B cell (primary cell): ENCODE measurements at regions of chr1 and their contacts with region 1.

Region 1: GRCh38 chr1:89843281-89844121 is 22.7 kb downstream of the LRRC8D start:
- DNase-seq: peak; percentile 85
- ATAC-seq: peak; percentile 93
- H3K4me3 ChIP-seq: peak overlapping the region; percentile 48 to 84 (median 70)
- H3K4me3 Mint-ChIP-seq: peak overlapping the region; percentile 90
- H3K27ac ChIP-seq: peak overlapping the region; percentile 42 to 75
- H3K27ac Mint-ChIP-seq: peak overlapping the region; percentile 74
- H3K4me1 ChIP-seq: peaks cover 28 to 30% of the 10 kb centered on the region in 2 donors
- H3K4me1 Mint-ChIP-seq: peaks cover 49% of the 10 kb centered on the region
- H3K27me3 ChIP-seq: no peaks in the 10 kb centered on the region
- H3K27me3 Mint-ChIP-seq: no peaks in the 10 kb centered on the region
- CTCF ChIP-seq: peak; percentile 85

Region 2: DNA sequence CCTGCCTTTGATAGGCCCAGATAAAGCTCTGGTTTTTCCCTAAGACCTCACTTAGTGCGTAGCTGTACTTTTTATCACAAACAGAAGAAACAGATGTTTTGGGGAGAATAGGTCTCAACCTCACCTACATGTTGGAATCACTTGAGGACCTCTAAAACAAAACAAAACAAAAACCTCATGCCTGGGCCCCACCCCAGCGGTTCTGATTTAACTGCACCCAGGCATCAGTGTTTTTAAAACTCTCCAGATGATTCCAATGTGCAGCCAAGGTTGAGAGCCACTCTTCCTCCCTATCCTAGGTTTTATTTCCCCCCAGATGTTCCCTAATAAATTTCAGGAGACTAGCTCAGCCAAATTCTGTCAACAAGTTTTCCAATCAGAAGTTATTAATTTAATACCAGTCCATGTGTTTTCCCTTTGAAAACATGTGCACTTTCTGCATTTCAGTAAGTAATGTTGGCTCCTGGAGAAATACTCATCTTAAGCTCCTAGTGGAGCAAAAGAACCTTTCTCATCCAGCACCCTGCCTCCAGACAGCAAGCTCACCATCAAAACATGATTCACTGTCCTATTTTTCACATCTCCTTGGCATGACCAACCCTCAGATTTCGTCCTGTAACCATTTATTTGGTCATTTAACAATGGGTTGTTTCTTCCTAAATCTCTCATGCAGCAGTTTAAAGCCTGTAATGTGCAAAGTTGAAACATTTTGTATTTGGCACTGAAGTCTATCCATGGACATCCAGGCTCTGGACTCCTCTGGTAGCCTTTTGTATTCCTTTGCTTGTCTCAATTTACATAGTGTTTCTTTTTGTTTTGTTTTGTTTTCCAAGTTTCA is 183.1 kb before region 1 on chr1:
- CTCF ChIA-PET with region 1: no interaction called
- POLR2A ChIA-PET with region 1: no interaction called
- intact Hi-C with region 1: no loop called
- DNase-seq: no peak
- ATAC-seq: no peak
- H3K4me3 ChIP-seq: no peak overlapping the region
- H3K4me3 Mint-ChIP-seq: no peak overlapping the region
- H3K27ac ChIP-seq: no peak overlapping the region
- H3K27ac Mint-ChIP-seq: no peak overlapping the region
- H3K4me1 ChIP-seq: peaks cover 26 to 27% of the 10 kb centered on the region in 2 donors
- H3K4me1 Mint-ChIP-seq: peaks cover 60% of the 10 kb centered on the region
- H3K27me3 ChIP-seq: no peaks in the 10 kb centered on the region
- H3K27me3 Mint-ChIP-seq: no peaks in the 10 kb centered on the region
- CTCF ChIP-seq: no peak

Region 3: DNA sequence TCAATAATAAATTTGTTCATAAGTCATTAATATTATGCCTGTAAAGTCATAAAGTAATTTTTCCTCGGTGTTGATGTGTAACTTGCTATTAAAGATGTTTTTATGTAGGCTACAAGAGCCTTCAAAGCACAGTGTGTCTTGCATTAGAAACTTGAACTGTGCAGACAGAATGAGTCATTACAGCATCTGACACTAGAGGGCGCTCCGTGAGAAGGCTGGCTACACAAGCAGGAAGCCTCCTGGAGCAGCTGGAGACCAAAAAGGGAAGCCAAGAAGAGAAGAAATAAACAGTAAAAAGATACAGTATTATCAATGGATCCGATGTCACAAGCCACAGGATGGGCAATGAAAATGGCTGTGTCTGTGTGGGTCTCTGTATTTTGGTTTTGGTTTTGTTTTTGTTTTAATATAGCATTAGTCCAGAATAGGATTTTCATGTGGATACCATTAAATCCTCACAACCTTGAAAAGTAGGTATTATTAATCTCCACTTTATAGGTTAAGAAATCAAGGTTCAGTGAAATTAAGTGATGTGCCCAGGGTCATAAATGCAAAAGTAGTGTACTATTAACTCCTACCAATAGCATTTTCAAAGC is 38.8 kb before region 1 on chr1:
- CTCF ChIA-PET with region 1: interaction called, 14 read pairs
- POLR2A ChIA-PET with region 1: no interaction called
- intact Hi-C with region 1: loop called (anchors 1 kb)
- DNase-seq: peak; percentile 87
- ATAC-seq: peak; percentile 93
- H3K4me3 ChIP-seq: no peak overlapping the region
- H3K4me3 Mint-ChIP-seq: no peak overlapping the region
- H3K27ac ChIP-seq: no peak overlapping the region
- H3K27ac Mint-ChIP-seq: no peak overlapping the region
- H3K4me1 ChIP-seq: peaks cover 0 to 3% of the 10 kb centered on the region in 2 donors
- H3K4me1 Mint-ChIP-seq: no peaks in the 10 kb centered on the region
- H3K27me3 ChIP-seq: peaks cover 0 to 3% (median 0%) of the 10 kb centered on the region in 4 experiments
- H3K27me3 Mint-ChIP-seq: no peaks in the 10 kb centered on the region
- CTCF ChIP-seq: peak; percentile 90

Region 4: GRCh38 chr1:89820422-89821321 is 22.8 kb before region 1 on chr1 and contains the start of gene LRRC8D:
- CTCF ChIA-PET with region 1: interaction called, 15 read pairs
- POLR2A ChIA-PET with region 1: interaction called, 18 read pairs
- intact Hi-C with region 1: loop called (anchors 1 kb)
- DNase-seq: peak; percentile 85
- ATAC-seq: peak; percentile 66
- H3K4me3 ChIP-seq: peak within 1 kb of the TSS; percentile 65 to 87 (median 76)
- H3K4me3 Mint-ChIP-seq: peak within 1 kb of the TSS; percentile 90
- H3K27ac ChIP-seq: peak within 1 kb of the TSS; percentile 68 to 73
- H3K27ac Mint-ChIP-seq: peak within 1 kb of the TSS; percentile 92
- H3K4me1 ChIP-seq: peaks cover 25 to 30% of the 10 kb centered on the region in 2 donors
- H3K4me1 Mint-ChIP-seq: peaks cover 46% of the 10 kb centered on the region
- H3K27me3 ChIP-seq: no peaks in the 10 kb centered on the region
- H3K27me3 Mint-ChIP-seq: no peaks in the 10 kb centered on the region
- CTCF ChIP-seq: no peak
- total RNA-seq, gene LRRC8D: 46.8 and 47.0 TPM in 2 replicates

Region 5: DNA sequence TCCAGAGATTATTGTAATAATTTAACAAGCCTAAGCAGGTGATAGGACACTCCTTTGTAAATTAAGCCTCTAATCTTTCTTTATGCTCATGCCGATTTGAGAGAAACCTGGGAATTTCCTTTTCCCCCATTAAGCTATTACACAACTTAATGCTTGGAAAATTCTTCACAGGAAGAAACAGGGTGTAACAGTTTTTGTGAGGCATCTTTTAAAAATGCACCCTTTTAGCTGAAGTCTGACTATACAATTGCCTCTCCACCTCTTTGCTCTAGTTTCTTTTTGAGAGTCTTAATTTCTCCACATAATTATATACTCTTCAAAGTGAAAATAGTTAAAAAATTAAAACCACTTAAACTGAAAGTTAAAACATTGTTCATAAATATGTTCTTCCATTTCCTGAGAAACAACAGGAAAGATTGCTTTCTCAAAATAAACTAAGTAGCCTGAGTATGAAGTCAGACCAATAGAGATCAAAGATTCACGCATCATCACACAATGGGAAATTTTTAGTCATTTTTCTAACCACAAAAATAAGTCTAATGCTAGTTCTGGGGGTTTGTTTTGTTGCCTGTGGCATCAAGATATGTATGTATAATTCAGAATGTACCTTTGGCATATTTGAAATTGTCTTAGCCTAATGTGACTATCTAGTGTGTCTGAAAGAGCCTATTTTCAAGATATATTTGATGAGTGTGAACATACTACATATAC is 12.1 kb after region 1 on chr1:
- CTCF ChIA-PET with region 1: interaction called, 15 read pairs
- POLR2A ChIA-PET with region 1: no interaction called
- intact Hi-C with region 1: loop called (anchors 1 kb)
- DNase-seq: peak; percentile 38
- ATAC-seq: peak; percentile 71
- H3K4me3 ChIP-seq: peak overlapping the region in 2 of 5 experiments; percentile 13 to 35
- H3K4me3 Mint-ChIP-seq: no peak overlapping the region
- H3K27ac ChIP-seq: peak overlapping the region in 1 of 2 donors; percentile 58
- H3K27ac Mint-ChIP-seq: peak overlapping the region; percentile 77
- H3K4me1 ChIP-seq: peaks cover 20 to 32% of the 10 kb centered on the region in 2 donors
- H3K4me1 Mint-ChIP-seq: peaks cover 9% of the 10 kb centered on the region
- H3K27me3 ChIP-seq: no peaks in the 10 kb centered on the region
- H3K27me3 Mint-ChIP-seq: no peaks in the 10 kb centered on the region
- CTCF ChIP-seq: no peak

Region 6: DNA sequence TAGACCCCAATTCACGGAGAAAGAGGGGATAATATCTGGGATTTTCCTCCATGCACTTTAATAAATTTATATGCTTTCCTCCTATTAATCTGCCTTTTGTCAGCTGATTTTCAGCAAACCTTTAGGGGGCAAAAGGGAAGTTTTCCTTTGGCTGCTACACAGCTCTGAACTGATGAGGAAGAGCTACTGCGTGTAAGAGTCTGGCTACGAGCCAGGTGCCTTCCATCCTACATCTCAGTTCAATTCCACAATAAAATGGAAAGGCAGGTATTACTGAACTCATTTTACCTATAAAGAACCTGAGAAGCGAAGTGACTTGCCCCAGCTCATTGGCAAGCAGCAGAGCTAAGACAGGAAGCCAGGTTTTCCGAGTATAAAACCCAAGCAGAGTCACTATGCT is 123.2 kb after region 1 on chr1:
- CTCF ChIA-PET with region 1: no interaction called
- POLR2A ChIA-PET with region 1: interaction called, 10 read pairs
- intact Hi-C with region 1: no loop called
- DNase-seq: no peak
- ATAC-seq: no peak
- H3K4me3 ChIP-seq: no peak overlapping the region
- H3K4me3 Mint-ChIP-seq: no peak overlapping the region
- H3K27ac ChIP-seq: no peak overlapping the region
- H3K27ac Mint-ChIP-seq: no peak overlapping the region
- H3K4me1 ChIP-seq: peaks cover 0 to 10% of the 10 kb centered on the region in 2 donors
- H3K4me1 Mint-ChIP-seq: peaks cover 10% of the 10 kb centered on the region
- H3K27me3 ChIP-seq: no peaks in the 10 kb centered on the region
- H3K27me3 Mint-ChIP-seq: peaks cover 10% of the 10 kb centered on the region
- CTCF ChIP-seq: no peak

Region 7: GRCh38 chr1:89987170-89987819 is 143.8 kb after region 1 on chr1:
- CTCF ChIA-PET with region 1: interaction called, 15 read pairs
- POLR2A ChIA-PET with region 1: no interaction called
- intact Hi-C with region 1: loop called (anchors 2 kb)
- DNase-seq: peak; percentile 76
- ATAC-seq: peak; percentile 93
- H3K4me3 ChIP-seq: no peak overlapping the region
- H3K4me3 Mint-ChIP-seq: no peak overlapping the region
- H3K27ac ChIP-seq: no peak overlapping the region
- H3K27ac Mint-ChIP-seq: no peak overlapping the region
- H3K4me1 ChIP-seq: no peaks in the 10 kb centered on the region
- H3K4me1 Mint-ChIP-seq: no peaks in the 10 kb centered on the region
- H3K27me3 ChIP-seq: no peaks in the 10 kb centered on the region
- H3K27me3 Mint-ChIP-seq: no peaks in the 10 kb centered on the region
- CTCF ChIP-seq: peak; percentile 94

Region 8: GRCh38 chr1:89994805-89995597 is 151.5 kb after region 1 on chr1 and contains the start of gene ZNF326:
- CTCF ChIA-PET with region 1: interaction called, 10 read pairs
- POLR2A ChIA-PET with region 1: no interaction called
- intact Hi-C with region 1: loop called (anchors 2 kb)
- DNase-seq: peak; percentile 94
- ATAC-seq: peak; percentile 97
- H3K4me3 ChIP-seq: peak within 1 kb of the TSS; percentile 72 to 95 (median 80)
- H3K4me3 Mint-ChIP-seq: peak within 1 kb of the TSS; percentile 99
- H3K27ac ChIP-seq: peak within 1 kb of the TSS; percentile 85 to 87
- H3K27ac Mint-ChIP-seq: peak within 1 kb of the TSS; percentile 96
- H3K4me1 ChIP-seq: peaks cover 8 to 12% of the 10 kb centered on the region in 2 donors
- H3K4me1 Mint-ChIP-seq: peaks cover 32% of the 10 kb centered on the region
- H3K27me3 ChIP-seq: no peaks in the 10 kb centered on the region
- H3K27me3 Mint-ChIP-seq: no peaks in the 10 kb centered on the region
- CTCF ChIP-seq: no peak
- total RNA-seq, gene ZNF326: 32.0 and 34.1 TPM in 2 replicates